Activated CD4-positive, alpha-beta T cell treated with anti-CD3 and anti-CD28 coated beads for 36 hours (primary cell): ENCODE measurements at regions of chr17 and their contacts with region 1.

Region 1: GRCh38 chr17:72556944-72557826 is 436.4 kb downstream of the SOX9 start:
- DNase-seq: peak; percentile 80
- ATAC-seq: peak; percentile 79
- H3K4me3 Mint-ChIP-seq: no peak overlapping the region
- H3K27ac Mint-ChIP-seq: no peak overlapping the region
- H3K4me1 Mint-ChIP-seq: no peaks in the 10 kb centered on the region
- H3K27me3 Mint-ChIP-seq: peaks cover 2% of the 10 kb centered on the region

Region 2: GRCh38 chr17:72539981-72540897 is 16.9 kb before region 1 on chr17:
- CTCF ChIA-PET with region 1: interaction called, 10 read pairs
- POLR2A ChIA-PET with region 1: no interaction called
- intact Hi-C with region 1: no loop called
- DNase-seq: peak; percentile 78
- ATAC-seq: peak; percentile 74
- H3K4me3 Mint-ChIP-seq: no peak overlapping the region
- H3K27ac Mint-ChIP-seq: no peak overlapping the region
- H3K4me1 Mint-ChIP-seq: peaks cover 5% of the 10 kb centered on the region
- H3K27me3 Mint-ChIP-seq: peaks cover 26% of the 10 kb centered on the region

Region 3: GRCh38 chr17:72661093-72661944 is 104.1 kb after region 1 on chr17:
- CTCF ChIA-PET with region 1: interaction called, 9 read pairs
- POLR2A ChIA-PET with region 1: no interaction called
- intact Hi-C with region 1: loop called in 1 of 2 experiments (anchors 2 kb)
- DNase-seq: no peak
- ATAC-seq: no peak
- H3K4me3 Mint-ChIP-seq: no peak overlapping the region
- H3K27ac Mint-ChIP-seq: no peak overlapping the region
- H3K4me1 Mint-ChIP-seq: no peaks in the 10 kb centered on the region
- H3K27me3 Mint-ChIP-seq: no peaks in the 10 kb centered on the region

Region 4: DNA sequence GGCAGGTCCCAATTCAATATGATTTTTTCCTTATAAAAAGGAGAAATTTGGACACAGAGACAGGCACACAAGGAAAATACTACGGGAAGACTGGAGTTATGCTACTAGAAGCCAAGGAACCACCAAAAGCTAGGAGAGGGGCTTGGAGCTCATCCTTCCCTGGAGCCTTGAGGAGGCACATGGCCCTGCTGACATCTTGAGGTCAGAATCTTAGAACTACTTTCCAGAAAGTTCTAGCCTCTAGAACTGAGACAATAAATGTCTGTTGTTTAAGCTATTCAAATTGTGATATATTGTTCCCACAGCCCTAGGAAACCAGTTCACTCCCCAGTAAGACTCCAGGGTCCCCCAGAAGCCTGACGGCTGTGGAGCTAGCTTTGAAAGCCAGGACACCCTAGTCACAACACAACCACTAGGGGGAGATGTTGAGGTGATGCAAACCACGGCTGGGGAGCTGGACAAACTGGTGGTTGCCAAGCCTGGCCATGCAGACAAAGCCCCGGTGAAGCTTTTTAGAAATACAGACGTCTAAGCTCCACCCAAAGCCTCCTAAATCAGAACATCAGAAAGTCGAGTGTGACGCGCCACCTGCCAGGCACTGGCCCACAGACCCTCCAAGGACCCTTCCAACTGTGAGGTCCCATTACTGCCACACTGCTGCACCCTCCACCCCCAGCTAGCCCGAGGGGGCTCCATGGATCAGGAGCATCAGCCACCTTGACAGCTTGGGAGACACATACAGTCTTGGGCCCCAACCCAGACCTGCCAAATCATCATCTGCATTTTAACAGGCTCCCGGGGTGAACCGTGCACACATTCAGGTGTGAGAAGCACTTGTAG is 428.9 kb after region 1 on chr17:
- CTCF ChIA-PET with region 1: interaction called, 8 read pairs
- POLR2A ChIA-PET with region 1: no interaction called
- intact Hi-C with region 1: loop called in 1 of 2 experiments (anchors 2 kb)
- DNase-seq: peak; percentile 70
- ATAC-seq: peak; percentile 79
- H3K4me3 Mint-ChIP-seq: no peak overlapping the region
- H3K27ac Mint-ChIP-seq: no peak overlapping the region
- H3K4me1 Mint-ChIP-seq: peaks cover 1% of the 10 kb centered on the region
- H3K27me3 Mint-ChIP-seq: no peaks in the 10 kb centered on the region

Region 5: DNA sequence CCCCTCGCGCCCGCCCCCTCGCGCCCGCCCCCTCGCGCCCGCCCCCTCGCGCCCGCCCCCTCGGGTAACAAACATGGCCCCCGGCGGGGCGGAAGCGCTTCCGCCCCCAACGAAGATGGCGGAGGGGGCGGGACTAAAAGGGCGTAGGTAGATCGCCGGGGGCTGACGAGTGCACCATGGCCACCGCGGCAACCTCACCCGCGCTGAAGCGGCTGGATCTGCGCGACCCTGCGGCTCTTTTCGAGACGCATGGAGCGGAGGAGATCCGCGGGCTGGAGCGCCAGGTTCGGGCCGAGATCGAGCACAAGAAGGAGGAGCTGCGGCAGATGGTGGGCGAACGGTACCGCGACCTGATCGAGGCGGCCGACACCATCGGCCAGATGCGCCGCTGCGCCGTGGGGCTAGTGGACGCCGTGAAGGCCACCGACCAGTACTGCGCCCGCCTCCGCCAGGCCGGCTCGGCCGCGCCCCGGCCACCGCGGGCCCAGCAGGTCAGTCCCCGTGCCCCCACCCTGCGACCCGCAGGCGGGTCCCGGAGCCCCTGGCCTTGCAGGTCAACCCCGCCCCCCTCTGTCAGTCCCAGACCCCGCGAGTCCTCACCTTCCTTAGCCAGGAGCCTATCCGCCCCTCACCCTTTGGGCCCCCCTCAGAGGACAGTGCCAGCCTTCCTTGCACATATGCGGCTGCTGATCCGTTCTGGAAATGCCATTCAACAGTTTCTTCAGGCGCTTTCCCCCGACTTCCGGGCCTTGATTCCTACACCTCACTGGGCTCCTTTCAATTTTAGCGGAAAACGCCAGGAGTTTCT is 635.9 kb after region 1 on chr17 and contains the start of gene COG1:
- CTCF ChIA-PET with region 1: no interaction called
- POLR2A ChIA-PET with region 1: no interaction called
- intact Hi-C with region 1: loop called in 1 of 2 experiments (anchors 1 kb)
- DNase-seq: peak; percentile 91
- ATAC-seq: peak; percentile 78
- H3K4me3 Mint-ChIP-seq: peak within 1 kb of the TSS; percentile 91
- H3K27ac Mint-ChIP-seq: peak within 1 kb of the TSS; percentile 97
- H3K4me1 Mint-ChIP-seq: peaks cover 18% of the 10 kb centered on the region
- H3K27me3 Mint-ChIP-seq: no peaks in the 10 kb centered on the region
- total RNA-seq, gene COG1: 25.6 to 39.0 TPM

Region 6: DNA sequence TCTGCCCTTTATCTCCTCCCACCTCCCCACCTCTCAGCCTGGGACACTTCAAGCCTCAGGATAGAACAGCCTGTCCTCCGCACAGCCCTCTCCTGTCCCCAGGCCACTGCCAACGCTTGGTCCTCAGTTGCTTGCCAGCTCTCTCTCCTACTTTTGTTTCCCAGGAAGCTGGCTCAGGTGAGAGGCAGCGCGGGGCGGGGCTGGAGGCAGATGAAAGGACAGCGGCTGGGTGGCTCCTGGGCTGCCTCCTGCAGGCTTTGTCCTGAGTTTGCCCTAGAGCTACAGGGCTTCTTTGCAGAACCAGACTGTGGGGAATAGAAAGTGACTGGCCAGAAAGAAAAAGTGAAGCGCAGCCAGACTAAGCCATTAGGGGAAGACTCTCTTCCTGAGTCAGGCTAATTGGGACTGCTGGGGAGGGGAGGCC is 802.8 kb after region 1 on chr17:
- CTCF ChIA-PET with region 1: interaction called, 3 read pairs
- POLR2A ChIA-PET with region 1: no interaction called
- intact Hi-C with region 1: loop called in 1 of 2 experiments (anchors 10 kb)
- DNase-seq: no peak
- ATAC-seq: no peak
- H3K4me3 Mint-ChIP-seq: no peak overlapping the region
- H3K27ac Mint-ChIP-seq: no peak overlapping the region
- H3K4me1 Mint-ChIP-seq: no peaks in the 10 kb centered on the region
- H3K27me3 Mint-ChIP-seq: no peaks in the 10 kb centered on the region